Motor neuron (in vitro differentiated cells): ENCODE measurements at regions of chr9 and their contacts with region 1.

Region 1: DNA sequence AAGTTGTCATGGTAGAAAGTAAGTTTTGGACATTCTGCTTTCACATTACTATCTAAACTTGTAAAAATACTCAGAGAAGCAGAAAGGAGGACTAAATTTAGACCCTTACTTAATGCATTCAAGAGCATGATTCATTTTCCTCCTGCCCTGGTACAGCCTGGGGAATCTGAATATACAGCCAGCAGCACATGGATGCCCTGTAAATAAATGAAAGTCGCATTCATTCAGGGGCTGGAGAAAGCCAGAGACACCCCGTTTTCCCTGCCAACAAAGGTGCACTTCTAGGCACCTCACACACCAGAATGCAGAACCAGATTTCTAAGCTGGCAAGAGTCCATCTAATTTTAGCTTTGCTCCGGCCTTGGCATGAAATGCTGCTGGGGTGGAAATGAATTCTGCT is 172.7 kb upstream of the KLF9 start:
- ATAC-seq: peak in 4 of 8 experiments; percentile 55 to 96 (median 84)
- H3K4me3 ChIP-seq: no peak overlapping the region
- H3K27ac ChIP-seq: no peak overlapping the region
- H3K4me1 ChIP-seq: no peaks in the 10 kb centered on the region

Region 2: GRCh38 chr9:70340572-70340971 is 246.6 kb before region 1 on chr9:
- in situ Hi-C with region 1: loop called in 1 of 9 experiments (anchors 25 kb)
- ATAC-seq: no peak
- H3K4me3 ChIP-seq: no peak overlapping the region
- H3K27ac ChIP-seq: no peak overlapping the region
- H3K4me1 ChIP-seq: no peaks in the 10 kb centered on the region

Region 3: GRCh38 chr9:70352802-70353201 is 234.4 kb before region 1 on chr9:
- in situ Hi-C with region 1: loop called in 3 of 9 experiments (anchors 25 kb)
- ATAC-seq: no peak
- H3K4me3 ChIP-seq: no peak overlapping the region
- H3K27ac ChIP-seq: no peak overlapping the region
- H3K4me1 ChIP-seq: no peaks in the 10 kb centered on the region

Region 4: DNA sequence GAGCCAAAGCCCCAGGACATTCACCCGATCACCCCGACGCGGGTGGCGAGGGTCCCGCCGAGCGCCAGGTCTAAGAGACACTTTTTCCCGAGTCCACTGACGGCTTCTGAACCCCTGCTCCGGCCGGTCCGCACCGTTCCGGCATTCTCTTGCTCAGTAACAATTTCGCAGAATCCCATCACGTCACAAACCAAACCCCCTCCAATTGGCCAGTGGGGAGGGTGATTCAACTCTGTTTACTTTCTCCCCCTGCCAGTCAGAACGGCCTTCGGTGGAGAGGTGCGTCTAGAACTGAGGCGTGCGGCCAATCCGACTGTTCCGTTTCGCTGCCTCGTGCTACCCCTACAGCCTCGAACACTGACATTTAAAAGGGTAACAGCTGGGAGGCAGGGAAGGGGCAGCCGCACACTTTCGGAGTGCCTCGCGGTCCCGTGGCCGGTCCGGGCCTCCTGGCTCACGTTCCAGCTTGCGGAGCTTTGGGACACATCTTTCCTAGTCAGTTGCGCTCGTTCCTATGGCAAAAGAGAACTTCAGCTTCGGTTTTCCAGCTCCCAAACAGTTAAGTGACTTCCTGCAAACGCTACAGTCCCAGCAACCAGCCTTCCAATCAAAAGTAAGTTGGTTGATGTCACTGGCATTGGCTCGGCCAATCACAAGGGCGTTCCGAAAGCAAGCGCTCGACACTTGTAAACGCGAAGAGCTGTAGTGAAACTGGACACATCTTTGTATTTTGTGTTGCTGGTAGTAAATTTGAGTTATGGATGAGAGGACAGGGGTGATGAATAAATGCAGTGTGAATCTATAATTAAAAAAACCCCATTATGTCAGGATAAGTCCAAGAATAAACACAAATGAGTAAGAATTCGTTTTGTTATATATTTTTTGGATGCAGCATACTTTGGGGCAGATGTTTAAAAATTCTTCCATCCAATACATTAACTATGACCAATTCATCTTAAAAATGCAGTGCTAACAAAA is 173.1 kb before region 1 on chr9 and contains the start of gene KLF9:
- in situ Hi-C with region 1: loop called in 1 of 9 experiments (anchors 25 kb)
- ATAC-seq: peak; percentile 47 to 76 (median 66)
- H3K4me3 ChIP-seq: peak within 1 kb of the TSS; percentile 29 to 49 (median 42)
- H3K27ac ChIP-seq: no peak within 1 kb of the TSS
- H3K4me1 ChIP-seq: peaks cover 5 to 9% of the 10 kb centered on the region in 2 donors
- total RNA-seq, gene KLF9: 0.79 to 32.9 (median 3.6) TPM